Heart left ventricle (tissue), 16 donors: ENCODE measurements at regions of chr22 and their contacts with region 1.

Region 1: GRCh38 chr22:24244101-24244787 is 638 bp downstream of the GGT5 start:
- DNase-seq: peak in 3 of 5 donors; percentile 43 to 68 (median 65)
- ATAC-seq: peak; percentile 17 to 36 (median 22)
- H3K4me3 ChIP-seq: peak overlapping the region in 11 of 12 donors; percentile 21 to 65 (median 51)
- H3K27ac ChIP-seq: peak overlapping the region; percentile 72 to 97 (median 86)
- H3K4me1 ChIP-seq: peaks cover 5 to 68% (median 38%) of the 10 kb centered on the region in 12 donors
- H3K27me3 ChIP-seq: no peaks in the 10 kb centered on the region
- CTCF ChIP-seq: no peak
- POLR2A ChIP-seq: no peak

Region 2: DNA sequence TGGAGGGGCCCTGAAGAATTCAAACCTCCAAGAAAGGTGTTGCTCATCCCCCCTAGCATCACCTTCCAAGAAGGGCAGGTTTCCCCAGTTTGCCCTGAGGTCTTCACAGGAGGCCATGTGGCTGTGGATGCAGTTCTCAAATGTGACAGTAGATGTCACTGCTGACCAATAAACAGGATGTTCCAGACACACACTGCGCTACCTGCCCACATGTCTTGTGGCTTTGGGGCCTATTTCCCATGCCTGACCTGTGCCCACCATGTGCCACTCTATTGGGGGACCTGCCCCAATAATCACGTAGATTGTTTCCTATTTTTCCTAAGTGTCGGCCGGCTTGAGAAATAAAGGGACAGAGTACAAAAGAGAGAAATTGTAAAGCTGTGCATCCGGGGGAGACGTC is 259.8 kb before region 1 on chr22:
- intact Hi-C with region 1: loop called in 2 of 10 experiments (anchors 5 kb)
- DNase-seq: peak in 1 of 5 donors; percentile 56
- ATAC-seq: peak in 2 of 4 donors; percentile 62 to 68
- H3K4me3 ChIP-seq: no peak overlapping the region
- H3K27ac ChIP-seq: no peak overlapping the region
- H3K4me1 ChIP-seq: no peaks in the 10 kb centered on the region
- H3K27me3 ChIP-seq: no peaks in the 10 kb centered on the region
- CTCF ChIP-seq: peak in 8 of 12 donors; percentile 41 to 77 (median 55)
- POLR2A ChIP-seq: no peak

Region 3: DNA sequence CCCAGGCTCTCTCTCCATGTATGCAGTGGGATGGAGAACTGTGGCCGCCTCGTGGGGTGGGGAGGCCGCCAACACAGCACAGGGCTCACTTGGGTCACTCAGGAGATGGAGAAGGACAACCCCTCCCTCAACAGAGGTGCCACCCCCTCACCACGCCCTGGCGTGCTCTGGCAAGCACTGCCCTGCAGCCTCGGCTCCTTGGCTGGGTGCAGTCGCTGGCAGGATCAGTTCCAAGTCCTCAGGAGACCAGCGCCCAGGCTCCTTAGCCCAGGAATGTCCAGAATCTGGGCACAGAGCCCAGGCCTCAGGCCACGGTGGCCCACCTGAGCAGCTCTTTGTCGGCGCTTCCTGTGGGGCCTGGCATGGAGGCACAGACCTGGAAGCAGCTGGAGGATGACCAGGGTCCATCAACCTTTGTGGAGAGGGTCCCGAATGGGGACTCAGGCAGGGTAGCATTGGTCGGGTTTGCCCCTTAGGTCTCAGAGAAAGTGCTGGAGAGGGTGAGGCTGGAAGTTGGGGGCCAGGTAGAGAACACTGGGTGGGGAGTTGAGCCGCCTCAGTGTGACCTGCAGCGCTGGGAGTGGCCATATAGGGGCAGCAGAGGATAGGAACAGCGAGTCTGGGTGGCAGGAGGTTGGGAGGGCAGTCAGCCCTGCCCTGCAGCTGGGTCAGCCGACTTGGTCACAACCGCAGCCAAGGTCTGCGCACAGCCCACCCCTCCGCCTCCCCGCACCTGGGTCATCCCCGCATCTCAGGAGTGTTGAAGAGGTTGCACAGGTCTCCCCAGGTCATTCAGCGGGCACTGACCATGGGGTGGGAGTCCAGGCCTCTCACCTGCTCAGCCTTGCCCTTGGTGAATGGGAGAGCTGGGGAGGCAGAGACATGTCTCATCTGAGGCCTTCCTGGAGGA is 54.7 kb before region 1 on chr22:
- intact Hi-C with region 1: loop called (anchors 1 to 5 kb)
- DNase-seq: peak; percentile 75 to 86 (median 77)
- ATAC-seq: peak; percentile 75 to 92 (median 88)
- H3K4me3 ChIP-seq: no peak overlapping the region
- H3K27ac ChIP-seq: peak overlapping the region in 1 of 12 donors; percentile 30
- H3K4me1 ChIP-seq: peaks cover 0 to 20% (median 11%) of the 10 kb centered on the region in 12 donors
- H3K27me3 ChIP-seq: no peaks in the 10 kb centered on the region
- CTCF ChIP-seq: peak; percentile 83 to 95 (median 90)
- POLR2A ChIP-seq: no peak

Region 4: DNA sequence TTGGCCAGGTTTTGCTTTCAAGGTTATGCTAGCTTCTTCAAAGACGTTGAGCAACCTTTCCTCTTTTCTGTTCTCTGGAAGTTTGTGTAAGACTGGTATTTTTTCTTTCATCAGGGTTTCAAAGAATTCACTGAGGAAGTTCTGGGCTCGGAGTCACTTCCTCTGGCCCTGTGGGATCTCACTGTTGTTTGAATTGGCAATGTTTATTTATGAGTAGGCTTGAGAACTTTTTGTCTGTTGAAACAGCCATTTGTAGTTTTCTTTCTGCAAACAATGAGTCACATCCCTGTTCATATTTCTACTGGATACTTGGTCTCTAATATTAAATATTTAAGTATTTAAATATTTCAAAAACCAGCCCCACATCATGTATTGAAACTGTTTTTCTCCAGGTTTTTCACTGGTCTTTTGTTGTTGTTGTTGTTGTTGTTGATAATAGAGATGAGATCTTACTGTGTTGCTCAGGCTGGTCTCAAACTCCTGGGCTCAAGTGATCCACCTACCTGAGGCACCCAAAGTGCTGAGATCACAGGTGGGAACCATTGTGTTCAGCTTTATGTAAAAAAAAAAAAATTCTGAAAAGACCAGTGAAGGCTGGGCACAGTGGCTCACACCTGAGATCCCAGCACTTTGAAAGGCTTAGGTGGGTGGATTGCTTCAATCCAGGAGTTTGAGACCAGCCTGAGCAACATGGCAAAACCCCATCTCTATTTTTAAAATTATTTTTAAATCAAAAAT is 36.1 kb before region 1 on chr22:
- intact Hi-C with region 1: loop called in 4 of 10 experiments (anchors 2 to 5 kb)
- DNase-seq: peak in 3 of 5 donors; percentile 56 to 68 (median 65)
- ATAC-seq: peak; percentile 85 to 97 (median 92)
- H3K4me3 ChIP-seq: peak overlapping the region in 2 of 12 donors; percentile 7 to 18
- H3K27ac ChIP-seq: peak overlapping the region; percentile 81 to 93 (median 86)
- H3K4me1 ChIP-seq: peaks cover 8 to 48% (median 23%) of the 10 kb centered on the region in 12 donors
- H3K27me3 ChIP-seq: no peaks in the 10 kb centered on the region
- CTCF ChIP-seq: no peak
- POLR2A ChIP-seq: peak in 1 of 2 donors; percentile 20